Panc1 (cell line): ENCODE measurements at regions of chr12 and their contacts with region 1.

Region 1: GRCh38 chr12:115810122-115810901 is 467.2 kb downstream of the MED13L start:
- DNase-seq: no peak
- ATAC-seq: no peak
- H3K4me3 ChIP-seq: no peak overlapping the region
- H3K27ac ChIP-seq: no peak overlapping the region
- H3K4me1 ChIP-seq: no peaks in the 10 kb centered on the region
- H3K27me3 ChIP-seq: peaks cover 11% of the 10 kb centered on the region
- CTCF ChIP-seq: no peak

Region 2: DNA sequence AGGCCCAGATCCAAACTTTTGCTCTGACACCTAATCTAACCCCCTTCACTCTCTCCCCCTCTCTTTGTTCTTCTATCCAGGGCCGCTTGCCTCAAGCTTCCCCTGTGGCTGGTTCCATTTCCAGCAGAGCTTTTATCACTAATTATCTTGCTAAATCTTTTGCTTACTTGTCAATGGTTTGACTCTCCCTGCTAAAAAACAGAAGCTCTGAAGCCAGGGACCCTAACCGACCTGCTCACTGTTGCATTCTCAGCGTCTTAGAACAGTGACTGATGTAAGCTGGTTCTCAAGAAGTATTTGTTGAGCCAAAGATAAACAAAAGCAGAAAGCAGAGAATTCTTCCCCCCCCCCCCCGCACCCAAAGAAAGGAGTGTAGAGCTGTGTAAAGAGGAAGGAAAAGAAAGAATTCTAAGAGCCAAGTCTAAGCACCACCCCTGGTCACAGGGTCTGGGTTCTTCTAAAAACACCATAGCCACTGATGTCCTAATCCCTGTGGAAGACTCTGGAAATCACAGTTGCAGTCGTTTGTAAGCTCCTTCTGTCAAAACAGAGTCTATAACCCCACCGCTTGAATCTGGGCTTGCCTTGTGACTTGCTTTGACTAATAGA is 81.3 kb after region 1 on chr12:
- CTCF ChIA-PET with region 1: interaction called, 10 read pairs
- POLR2A ChIA-PET with region 1: no interaction called
- in situ Hi-C with region 1: no loop called
- intact Hi-C with region 1: no loop called
- DNase-seq: no peak
- ATAC-seq: no peak
- H3K4me3 ChIP-seq: no peak overlapping the region
- H3K27ac ChIP-seq: no peak overlapping the region
- H3K4me1 ChIP-seq: no peaks in the 10 kb centered on the region
- H3K27me3 ChIP-seq: peaks cover 5% of the 10 kb centered on the region; the same call in 1 of the 2 replicates
- CTCF ChIP-seq: no peak